ENCODE measurements at regions of chr7 and their contacts with region 1.

Region 1: DNA sequence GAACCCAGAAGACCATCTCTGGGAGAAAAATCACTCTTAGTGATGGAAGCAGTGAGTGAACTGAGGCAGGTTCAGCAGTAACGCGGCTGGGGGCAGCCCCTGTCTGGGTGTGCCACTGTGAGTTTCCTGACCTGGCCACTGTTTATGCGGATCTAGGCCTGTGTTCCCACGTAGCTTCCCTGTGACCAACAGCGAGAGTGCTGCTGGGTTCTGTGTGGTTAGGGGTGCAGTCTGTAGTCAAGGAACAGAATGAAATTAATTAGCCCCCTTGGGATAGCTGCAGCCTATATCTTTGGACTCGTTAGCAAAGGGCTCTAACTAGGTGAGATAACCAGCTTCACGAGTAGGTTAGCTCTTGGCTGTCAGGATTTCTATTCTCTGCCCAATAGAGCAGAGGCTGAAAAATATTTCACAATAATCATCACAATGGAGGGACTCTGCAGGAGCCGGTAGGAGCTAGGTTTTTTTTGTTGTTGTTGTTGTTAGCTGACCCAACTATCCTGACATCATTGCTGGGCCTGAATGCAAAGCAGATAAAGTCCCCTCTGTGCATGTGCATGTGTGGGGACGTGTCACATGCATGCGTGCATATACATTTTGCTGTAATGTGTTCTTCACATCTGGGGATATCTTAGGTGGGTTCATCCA is 164.9 kb downstream of the TMEM178B start:
- DNase-seq: no peak
- ATAC-seq: no peak
- H3K4me3 ChIP-seq: no peak overlapping the region
- H3K4me3 Mint-ChIP-seq: no peak overlapping the region
- H3K27ac ChIP-seq: no peak overlapping the region
- H3K27ac Mint-ChIP-seq: no peak overlapping the region
- H3K4me1 ChIP-seq: no peaks in the 10 kb centered on the region
- H3K4me1 Mint-ChIP-seq: no peaks in the 10 kb centered on the region
- H3K27me3 ChIP-seq: no peaks in the 10 kb centered on the region
- H3K27me3 Mint-ChIP-seq: peaks cover 11 to 14% of the 10 kb centered on the region in 2 donors

Region 2: GRCh38 chr7:141128506-141128905 is 110.2 kb before region 1 on chr7:
- CTCF ChIA-PET with region 1: no interaction called
- POLR2A ChIA-PET with region 1: no interaction called
- DNase-seq: no peak
- ATAC-seq: no peak
- H3K4me3 ChIP-seq: no peak overlapping the region
- H3K4me3 Mint-ChIP-seq: no peak overlapping the region
- H3K27ac ChIP-seq: no peak overlapping the region
- H3K27ac Mint-ChIP-seq: no peak overlapping the region
- H3K4me1 ChIP-seq: no peaks in the 10 kb centered on the region
- H3K4me1 Mint-ChIP-seq: no peaks in the 10 kb centered on the region
- H3K27me3 ChIP-seq: peaks cover 0 to 9% of the 10 kb centered on the region in 2 experiments
- H3K27me3 Mint-ChIP-seq: peaks cover 18 to 24% of the 10 kb centered on the region in 2 donors

Region 3: GRCh38 chr7:141220263-141220880 is 18.3 kb before region 1 on chr7:
- CTCF ChIA-PET with region 1: interaction called in 1 of 2 experiments, 14 read pairs
- POLR2A ChIA-PET with region 1: no interaction called
- DNase-seq: no peak
- ATAC-seq: no peak
- H3K4me3 ChIP-seq: no peak overlapping the region
- H3K4me3 Mint-ChIP-seq: no peak overlapping the region
- H3K27ac ChIP-seq: no peak overlapping the region
- H3K27ac Mint-ChIP-seq: no peak overlapping the region
- H3K4me1 ChIP-seq: no peaks in the 10 kb centered on the region
- H3K4me1 Mint-ChIP-seq: no peaks in the 10 kb centered on the region
- H3K27me3 ChIP-seq: peaks cover 0 to 25% of the 10 kb centered on the region in 2 experiments
- H3K27me3 Mint-ChIP-seq: peaks cover 6 to 37% of the 10 kb centered on the region in 2 donors

Measured in T-cell (primary cell).